ENCODE measurements at regions of chr9 and their contacts with region 1.

Region 1: DNA sequence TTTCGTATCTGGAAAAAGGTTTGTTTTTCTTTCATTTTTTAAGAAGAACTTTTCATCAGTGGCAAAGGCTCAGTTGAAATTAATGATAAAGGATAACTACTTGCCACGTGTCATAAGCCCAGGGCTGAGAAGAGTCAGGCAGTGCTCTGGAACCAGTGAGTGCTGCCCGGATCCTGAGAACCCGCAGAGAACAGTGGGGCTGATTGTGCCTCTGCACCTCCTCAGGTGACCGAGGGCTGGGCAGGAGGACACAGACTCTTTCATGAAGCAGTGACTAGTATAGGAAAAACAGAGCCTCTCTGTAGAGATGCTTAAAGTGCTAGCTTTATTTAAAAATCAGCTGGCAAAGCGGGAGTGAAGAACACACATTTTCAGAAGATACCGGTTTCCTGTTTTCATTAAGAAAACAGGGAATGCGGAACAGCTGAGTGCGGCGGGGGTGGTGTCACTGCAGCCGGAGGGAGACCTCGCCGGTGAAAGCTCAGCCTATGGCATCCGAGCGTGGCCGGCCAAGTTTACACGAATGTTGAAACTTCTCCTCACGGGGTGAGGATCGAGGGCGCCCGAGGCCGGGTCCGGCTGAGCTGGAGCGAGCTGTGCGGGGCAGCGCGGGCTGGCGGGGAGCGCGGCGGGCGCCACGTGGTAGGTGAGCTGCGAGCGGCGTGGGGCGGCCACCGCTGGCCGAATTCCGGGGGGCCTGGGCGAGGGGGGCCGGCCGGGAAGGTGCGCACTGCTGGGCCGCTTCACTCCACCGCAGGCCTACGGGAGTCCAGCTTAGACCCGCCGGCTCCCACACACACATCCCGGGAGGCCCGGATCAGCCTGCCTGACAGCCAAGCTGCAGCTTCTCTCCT is 134.7 kb upstream of the DMRT1 start:
- DNase-seq: no peak
- H3K4me3 ChIP-seq: no peak overlapping the region
- H3K27ac ChIP-seq: no peak overlapping the region
- H3K4me1 ChIP-seq: peaks cover 12% of the 10 kb centered on the region
- CTCF ChIP-seq: no peak

Region 2: GRCh38 chr9:318646-319045 is 388.2 kb before region 1 on chr9:
- CTCF ChIA-PET with region 1: no interaction called
- POLR2A ChIA-PET with region 1: no interaction called
- intact Hi-C with region 1: no loop called
- DNase-seq: no peak
- H3K4me3 ChIP-seq: no peak overlapping the region
- H3K27ac ChIP-seq: no peak overlapping the region
- H3K4me1 ChIP-seq: no peaks in the 10 kb centered on the region
- CTCF ChIP-seq: no peak

Region 3: GRCh38 chr9:495739-496138 is 211.1 kb before region 1 on chr9:
- CTCF ChIA-PET with region 1: no interaction called
- POLR2A ChIA-PET with region 1: no interaction called
- intact Hi-C with region 1: no loop called
- DNase-seq: no peak
- H3K4me3 ChIP-seq: no peak overlapping the region
- H3K27ac ChIP-seq: no peak overlapping the region
- H3K4me1 ChIP-seq: no peaks in the 10 kb centered on the region
- CTCF ChIP-seq: no peak

Region 4: DNA sequence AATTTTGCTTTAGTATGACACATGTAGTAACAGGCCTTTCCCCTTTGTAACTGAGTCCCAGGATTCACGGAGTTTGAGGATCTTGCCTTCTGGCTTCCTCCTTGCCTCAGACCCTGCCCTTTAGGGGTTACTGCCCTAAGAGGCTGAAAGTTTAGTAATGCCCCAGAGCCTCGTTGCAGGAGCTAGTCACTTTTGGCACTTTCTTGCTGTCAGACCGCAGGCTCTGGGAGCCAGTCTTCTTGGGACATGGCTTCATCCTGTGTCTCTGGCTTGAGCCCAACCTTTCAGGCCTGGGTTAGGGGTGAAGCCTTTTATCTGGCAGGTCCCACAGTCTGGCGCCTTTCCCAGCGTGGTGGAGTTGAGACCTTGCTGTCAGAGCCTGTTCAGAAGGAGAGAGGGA is 51.0 kb before region 1 on chr9:
- CTCF ChIA-PET with region 1: no interaction called
- POLR2A ChIA-PET with region 1: no interaction called
- intact Hi-C with region 1: no loop called
- DNase-seq: no peak
- H3K4me3 ChIP-seq: no peak overlapping the region
- H3K27ac ChIP-seq: no peak overlapping the region
- H3K4me1 ChIP-seq: peaks cover 19% of the 10 kb centered on the region
- CTCF ChIP-seq: no peak

Region 5: GRCh38 chr9:693201-694091 is 13.4 kb before region 1 on chr9:
- CTCF ChIA-PET with region 1: no interaction called
- POLR2A ChIA-PET with region 1: interaction called, 10 read pairs
- intact Hi-C with region 1: no loop called
- DNase-seq: peak; percentile 21
- H3K4me3 ChIP-seq: no peak overlapping the region
- H3K27ac ChIP-seq: no peak overlapping the region
- H3K4me1 ChIP-seq: peaks cover 18% of the 10 kb centered on the region
- CTCF ChIP-seq: no peak

Region 6: GRCh38 chr9:751137-752051 is 44.6 kb after region 1 on chr9:
- CTCF ChIA-PET with region 1: no interaction called
- POLR2A ChIA-PET with region 1: no interaction called
- intact Hi-C with region 1: loop called (anchors 2 kb)
- DNase-seq: peak; percentile 20
- H3K4me3 ChIP-seq: no peak overlapping the region
- H3K27ac ChIP-seq: no peak overlapping the region
- H3K4me1 ChIP-seq: peaks cover 30% of the 10 kb centered on the region
- CTCF ChIP-seq: no peak

Measured in OCI-LY7 (cell line).